CD8-positive, alpha-beta T cell (primary cell): ENCODE measurements at regions of chr3 and their contacts with region 1.

Region 1: GRCh38 chr3:48898383-48899234 is at the start of gene SLC25A20:
- DNase-seq: peak; percentile 78 to 94 (median 89)
- ATAC-seq: peak; percentile 96
- H3K4me3 ChIP-seq: peak within 1 kb of the TSS; percentile 90 to 94
- H3K4me3 Mint-ChIP-seq: peak within 1 kb of the TSS; percentile 96
- H3K27ac ChIP-seq: peak within 1 kb of the TSS; percentile 50 to 96
- H3K27ac Mint-ChIP-seq: peak within 1 kb of the TSS; percentile 83
- H3K4me1 ChIP-seq: peaks cover 37% of the 10 kb centered on the region
- H3K4me1 Mint-ChIP-seq: peaks cover 37% of the 10 kb centered on the region
- H3K27me3 ChIP-seq: no peaks in the 10 kb centered on the region
- H3K27me3 Mint-ChIP-seq: no peaks in the 10 kb centered on the region
- CTCF ChIP-seq: no peak
- total RNA-seq, gene SLC25A20: 0.46 to 0.64 TPM

Region 2: GRCh38 chr3:48708481-48708889 is 190.1 kb before region 1 on chr3:
- CTCF ChIA-PET with region 1: no interaction called
- POLR2A ChIA-PET with region 1: no interaction called
- intact Hi-C with region 1: no loop called
- DNase-seq: no peak
- ATAC-seq: no peak
- H3K4me3 ChIP-seq: no peak overlapping the region
- H3K4me3 Mint-ChIP-seq: peak overlapping the region; percentile 8
- H3K27ac ChIP-seq: no peak overlapping the region
- H3K27ac Mint-ChIP-seq: peak overlapping the region; percentile 72
- H3K4me1 ChIP-seq: peaks cover 52% of the 10 kb centered on the region
- H3K4me1 Mint-ChIP-seq: peaks cover 64% of the 10 kb centered on the region
- H3K27me3 ChIP-seq: no peaks in the 10 kb centered on the region
- H3K27me3 Mint-ChIP-seq: no peaks in the 10 kb centered on the region
- CTCF ChIP-seq: no peak

Region 3: DNA sequence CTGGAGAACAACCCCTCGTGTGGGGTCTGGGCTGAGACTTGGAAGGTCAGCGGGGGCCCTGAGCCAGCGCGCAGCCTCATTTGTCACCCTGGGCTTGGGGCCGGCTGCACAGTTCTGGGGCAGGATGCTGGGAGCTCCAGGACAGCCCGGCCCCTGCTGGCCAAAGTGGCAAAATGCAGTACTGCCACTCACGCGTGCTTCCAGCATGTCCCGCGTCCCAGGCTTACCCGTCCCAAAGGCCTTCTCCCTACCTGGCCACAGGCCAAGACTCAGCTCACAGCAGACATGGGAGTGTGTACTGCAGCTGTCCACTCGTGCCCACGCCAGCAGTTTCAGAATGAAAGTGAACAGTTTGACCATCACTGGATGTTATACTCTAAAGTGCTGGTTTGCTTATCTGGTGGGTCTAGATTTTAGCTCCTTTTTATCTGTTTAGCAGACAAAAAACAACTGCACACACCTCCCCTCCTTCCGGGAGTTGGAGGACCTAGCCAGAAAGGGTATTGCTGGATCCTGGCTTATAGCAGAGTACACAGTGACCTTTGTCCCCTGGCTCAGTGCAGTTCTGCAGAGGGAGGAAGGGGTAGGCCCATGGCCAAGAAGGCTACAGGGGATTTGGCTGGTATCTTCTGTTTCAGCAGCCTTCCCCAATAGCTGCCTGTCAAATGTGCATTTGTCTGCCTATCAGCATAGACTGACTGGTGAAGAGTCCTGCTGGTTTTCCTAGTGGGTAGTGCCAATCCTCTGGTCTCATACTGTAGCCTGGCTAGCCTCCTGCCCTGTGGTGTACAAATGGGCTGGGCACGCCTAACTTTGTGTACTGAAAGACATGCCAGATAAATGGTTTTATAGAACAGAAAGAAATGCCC is 158.4 kb before region 1 on chr3:
- CTCF ChIA-PET with region 1: interaction called, 3 read pairs
- POLR2A ChIA-PET with region 1: no interaction called
- intact Hi-C with region 1: loop called in 1 of 2 experiments (anchors 5 kb)
- DNase-seq: peak; percentile 9 to 66 (median 54)
- ATAC-seq: peak; percentile 86
- H3K4me3 ChIP-seq: no peak overlapping the region
- H3K4me3 Mint-ChIP-seq: no peak overlapping the region
- H3K27ac ChIP-seq: no peak overlapping the region
- H3K27ac Mint-ChIP-seq: no peak overlapping the region
- H3K4me1 ChIP-seq: peaks cover 3% of the 10 kb centered on the region
- H3K4me1 Mint-ChIP-seq: peaks cover 2% of the 10 kb centered on the region
- H3K27me3 ChIP-seq: no peaks in the 10 kb centered on the region
- H3K27me3 Mint-ChIP-seq: no peaks in the 10 kb centered on the region
- CTCF ChIP-seq: peak; percentile 60

Region 4: DNA sequence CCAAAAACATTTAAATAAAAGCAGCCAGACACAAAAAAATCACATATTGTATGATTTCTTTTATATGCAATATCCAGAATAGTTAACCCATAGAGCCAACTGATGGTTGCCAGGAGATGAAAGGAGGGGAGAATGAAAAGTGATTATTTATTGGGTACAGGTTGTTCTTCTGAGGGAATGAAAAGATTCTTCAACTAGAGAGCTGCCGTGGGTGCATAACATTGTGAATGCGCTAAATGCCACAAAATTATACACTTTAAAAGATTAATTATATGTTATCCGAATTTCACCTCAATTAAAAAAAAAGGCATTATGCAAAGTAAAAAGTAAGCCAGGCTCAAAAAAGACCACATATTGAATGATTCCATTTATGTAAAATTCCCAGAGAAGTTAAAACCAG is 87.1 kb before region 1 on chr3:
- CTCF ChIA-PET with region 1: no interaction called
- POLR2A ChIA-PET with region 1: interaction called, 3 read pairs
- intact Hi-C with region 1: loop called in 1 of 2 experiments (anchors 1 kb)
- DNase-seq: no peak
- ATAC-seq: no peak
- H3K4me3 ChIP-seq: no peak overlapping the region
- H3K4me3 Mint-ChIP-seq: no peak overlapping the region
- H3K27ac ChIP-seq: peak overlapping the region; percentile 15 to 89
- H3K27ac Mint-ChIP-seq: peak overlapping the region; percentile 23
- H3K4me1 ChIP-seq: peaks cover 14% of the 10 kb centered on the region
- H3K4me1 Mint-ChIP-seq: peaks cover 35% of the 10 kb centered on the region
- H3K27me3 ChIP-seq: no peaks in the 10 kb centered on the region
- H3K27me3 Mint-ChIP-seq: no peaks in the 10 kb centered on the region
- CTCF ChIP-seq: no peak

Region 5: GRCh38 chr3:48847504-48848423 is 50.8 kb before region 1 on chr3 and contains the start of gene PRKAR2A:
- CTCF ChIA-PET with region 1: no interaction called
- POLR2A ChIA-PET with region 1: interaction called, 3 read pairs
- intact Hi-C with region 1: loop called (anchors 2 kb)
- DNase-seq: peak; percentile 67 to 93 (median 83)
- ATAC-seq: peak; percentile 75
- H3K4me3 ChIP-seq: peak within 1 kb of the TSS; percentile 68 to 72
- H3K4me3 Mint-ChIP-seq: peak within 1 kb of the TSS; percentile 86
- H3K27ac ChIP-seq: peak within 1 kb of the TSS; percentile 40 to 90
- H3K27ac Mint-ChIP-seq: peak within 1 kb of the TSS; percentile 97
- H3K4me1 ChIP-seq: peaks cover 26% of the 10 kb centered on the region
- H3K4me1 Mint-ChIP-seq: peaks cover 31% of the 10 kb centered on the region
- H3K27me3 ChIP-seq: no peaks in the 10 kb centered on the region
- H3K27me3 Mint-ChIP-seq: no peaks in the 10 kb centered on the region
- CTCF ChIP-seq: no peak
- total RNA-seq, gene PRKAR2A: 75.2 to 75.6 TPM

Region 6: DNA sequence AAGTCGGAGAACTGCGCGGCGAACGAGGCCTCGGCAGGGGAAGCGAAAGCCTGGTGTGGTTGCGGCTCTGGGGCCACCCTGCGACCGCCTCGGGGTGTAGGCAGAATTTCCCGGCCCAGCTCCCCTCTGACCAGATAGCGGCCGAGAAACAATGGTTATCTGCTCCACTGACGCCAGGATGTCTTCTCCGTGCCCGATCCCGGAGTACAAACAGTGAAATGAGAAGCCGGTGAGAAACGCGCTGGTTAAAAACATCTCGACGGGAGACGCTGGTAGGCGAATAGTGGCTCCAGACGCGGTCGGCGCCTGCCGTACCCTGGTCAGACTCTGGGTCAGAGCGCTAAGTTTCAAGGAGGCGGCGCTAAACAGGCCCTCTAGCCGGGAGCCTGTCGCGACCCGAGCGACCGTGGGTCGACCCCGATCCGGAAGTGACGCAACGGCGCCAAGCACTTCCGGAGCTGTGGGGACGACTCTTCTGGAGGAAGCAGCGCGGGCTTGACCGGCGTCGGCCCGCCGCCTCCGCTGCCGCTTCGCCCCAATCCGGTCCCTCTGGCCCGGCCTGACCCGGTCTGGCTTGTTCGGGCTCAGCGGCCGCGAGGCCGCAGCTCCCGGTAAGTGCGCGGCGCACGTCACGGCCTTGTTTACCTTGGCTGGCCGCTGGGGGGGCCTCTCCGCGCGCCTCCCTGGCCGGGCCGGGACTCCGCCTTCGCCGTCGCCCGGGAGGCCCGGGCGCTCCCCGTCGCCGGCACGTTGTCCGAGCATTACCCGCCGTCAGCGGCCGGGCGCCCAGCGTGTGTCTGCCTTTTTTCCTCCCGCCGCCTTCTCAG is 20.0 kb after region 1 on chr3 and contains the start of gene ARIH2:
- CTCF ChIA-PET with region 1: interaction called, 13 read pairs
- POLR2A ChIA-PET with region 1: interaction called, 26 read pairs
- intact Hi-C with region 1: loop called (anchors 1 kb)
- DNase-seq: peak; percentile 74 to 95 (median 88)
- ATAC-seq: peak; percentile 72
- H3K4me3 ChIP-seq: peak within 1 kb of the TSS; percentile 92 to 93
- H3K4me3 Mint-ChIP-seq: peak within 1 kb of the TSS; percentile 98
- H3K27ac ChIP-seq: peak within 1 kb of the TSS; percentile 99
- H3K27ac Mint-ChIP-seq: peak within 1 kb of the TSS; percentile 99
- H3K4me1 ChIP-seq: peaks cover 22% of the 10 kb centered on the region
- H3K4me1 Mint-ChIP-seq: peaks cover 27% of the 10 kb centered on the region
- H3K27me3 ChIP-seq: no peaks in the 10 kb centered on the region
- H3K27me3 Mint-ChIP-seq: no peaks in the 10 kb centered on the region
- CTCF ChIP-seq: peak; percentile 24
- total RNA-seq, gene ARIH2: 225 to 242 TPM

Region 7: GRCh38 chr3:48929358-48930035 is 30.9 kb after region 1 on chr3:
- CTCF ChIA-PET with region 1: no interaction called
- POLR2A ChIA-PET with region 1: no interaction called
- intact Hi-C with region 1: loop called in 1 of 2 experiments (anchors 5 kb)
- DNase-seq: no peak
- ATAC-seq: no peak
- H3K4me3 ChIP-seq: no peak overlapping the region
- H3K4me3 Mint-ChIP-seq: peak overlapping the region; percentile 10
- H3K27ac ChIP-seq: peak overlapping the region; percentile 4 to 25
- H3K27ac Mint-ChIP-seq: peak overlapping the region; percentile 4
- H3K4me1 ChIP-seq: peaks cover 47% of the 10 kb centered on the region
- H3K4me1 Mint-ChIP-seq: peaks cover 70% of the 10 kb centered on the region
- H3K27me3 ChIP-seq: no peaks in the 10 kb centered on the region
- H3K27me3 Mint-ChIP-seq: no peaks in the 10 kb centered on the region
- CTCF ChIP-seq: no peak